ENCODE measurements at regions of chr3 and their contacts with region 1.

Region 1: GRCh38 chr3:51941798-51942602 is at the starts of genes PARP3 and RRP9:
- DNase-seq: peak; percentile 100
- H3K4me3 ChIP-seq: peak within 1 kb of the TSS; percentile 70 to 97 (median 89)
- H3K27ac ChIP-seq: peak within 1 kb of the TSS; percentile 83 to 95 (median 91)
- H3K4me1 ChIP-seq: peaks cover 26 to 36% (median 31%) of the 10 kb centered on the region in 4 donors
- H3K27me3 ChIP-seq: no peaks in the 10 kb centered on the region
- CTCF ChIP-seq: peak in 6 of 7 experiments; percentile 31 to 100 (median 99)
- EP300 ChIP-seq: no peak
- POLR2A ChIP-seq: peak in 1 of 4 donors; percentile 21
- total RNA-seq, gene PARP3: 14.3 to 39.7 (median 25.0) TPM
- total RNA-seq, gene RRP9: 3.2 to 13.5 (median 11.7) TPM

Region 2: DNA sequence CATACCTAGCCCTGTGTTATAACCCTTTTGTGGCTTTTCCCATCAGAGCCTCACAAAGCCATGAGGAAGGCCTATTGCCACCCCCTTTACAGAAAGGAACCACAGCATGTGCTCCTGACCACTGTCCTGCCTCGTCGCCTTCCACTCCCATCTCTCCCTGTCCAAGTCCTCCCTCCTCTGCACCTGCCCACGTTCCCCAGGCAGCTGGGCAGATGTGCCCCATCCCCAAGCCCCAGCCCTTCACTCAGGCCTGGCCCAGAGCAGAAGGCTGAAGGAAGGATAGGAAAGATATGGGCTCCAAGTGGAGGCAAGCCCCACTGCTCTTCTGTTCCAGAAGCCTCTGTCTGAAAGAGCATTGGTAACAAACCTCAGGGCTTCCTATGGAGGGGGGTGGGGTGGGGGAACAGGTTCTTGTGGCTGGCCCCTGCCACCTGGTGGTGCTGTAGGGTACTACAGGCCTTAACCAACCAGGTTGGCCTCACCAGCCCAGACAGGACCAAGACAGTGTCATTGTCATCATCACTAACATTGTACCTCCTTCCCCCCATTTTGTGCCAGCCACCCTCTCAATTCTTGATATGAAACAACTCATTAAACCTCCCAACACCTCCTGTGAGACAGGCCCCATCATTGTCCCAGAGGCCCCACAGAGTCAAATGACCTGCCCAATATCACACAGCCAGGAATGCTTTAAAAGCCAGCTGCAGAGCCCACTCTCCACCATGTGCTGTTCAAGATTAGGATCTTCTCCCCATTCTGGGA is 202.2 kb after region 1 on chr3:
- intact Hi-C with region 1: loop called (anchors 10 kb)
- DNase-seq: peak; percentile 90 to 94
- H3K4me3 ChIP-seq: no peak overlapping the region
- H3K27ac ChIP-seq: no peak overlapping the region
- H3K4me1 ChIP-seq: peaks cover 0 to 5% (median 2%) of the 10 kb centered on the region in 4 donors
- H3K27me3 ChIP-seq: no peaks in the 10 kb centered on the region
- CTCF ChIP-seq: peak in 6 of 7 experiments; percentile 95 to 99 (median 98)
- EP300 ChIP-seq: no peak
- POLR2A ChIP-seq: no peak

Measured in stomach (tissue), 19 donors.